Motor neuron (in vitro differentiated cells): ENCODE measurements at regions of chr6 and their contacts with region 1.

Region 1: DNA sequence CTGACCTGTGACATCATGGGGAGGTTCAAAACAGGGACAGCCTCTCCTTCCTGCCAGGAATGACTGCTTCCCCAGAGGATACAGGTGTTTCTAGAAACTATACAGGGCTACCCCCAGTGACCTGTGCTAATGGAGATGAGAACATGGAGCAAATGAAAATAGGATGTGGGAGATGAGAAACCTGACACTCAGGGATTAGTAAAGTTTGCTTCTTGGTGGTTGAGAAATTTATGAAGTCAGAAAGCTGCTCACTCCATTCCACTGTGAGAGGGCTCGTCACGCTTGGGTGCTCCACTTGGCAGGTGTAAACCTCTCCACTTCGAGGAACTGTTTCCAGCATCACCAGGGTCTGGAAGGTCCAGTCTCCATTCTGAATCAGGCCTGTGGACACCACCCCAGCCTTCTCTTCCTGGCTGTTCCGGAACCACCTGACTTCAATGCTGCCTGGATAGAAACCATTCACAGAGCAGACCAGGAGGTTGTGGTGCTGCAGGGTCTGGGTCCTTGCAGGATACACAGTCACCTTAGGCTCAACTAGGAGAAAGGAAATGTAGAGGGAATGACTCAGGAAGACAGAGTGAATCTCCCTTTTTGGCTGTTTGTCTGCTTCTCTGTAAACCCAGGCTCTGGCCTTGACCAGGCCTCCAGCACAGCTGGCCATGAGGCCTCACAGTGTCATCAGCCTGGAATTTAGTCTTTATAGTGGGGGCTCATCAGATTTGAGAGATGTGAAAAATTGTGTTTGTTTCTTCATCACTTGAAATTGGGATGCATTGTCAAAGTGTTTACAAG is 10.8 kb downstream of the HLA-DRB5 start:
- ATAC-seq: no peak
- H3K4me3 ChIP-seq: no peak overlapping the region
- H3K27ac ChIP-seq: no peak overlapping the region
- H3K4me1 ChIP-seq: no peaks in the 10 kb centered on the region

Region 2: DNA sequence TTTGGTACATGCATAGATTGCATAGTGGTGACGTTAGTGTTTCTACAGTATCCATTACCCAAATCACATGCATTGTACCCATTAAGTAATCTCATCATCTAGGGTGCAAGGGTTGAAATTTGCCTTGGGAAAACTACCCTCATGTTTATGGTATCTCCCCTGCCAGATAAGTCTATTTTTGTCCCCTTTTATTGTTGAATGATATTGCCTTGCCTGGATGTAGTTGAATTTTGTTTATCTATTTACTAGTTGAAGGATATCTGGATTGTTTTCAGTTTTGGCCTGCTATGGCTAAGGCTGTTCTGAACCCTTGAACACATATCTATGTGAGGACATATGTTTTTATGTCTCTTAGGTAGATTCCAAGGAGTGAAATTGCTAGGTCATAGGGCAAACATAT is 56.9 kb after region 1 on chr6:
- in situ Hi-C with region 1: loop called in 4 of 9 experiments (anchors 10 kb)
- ATAC-seq: no peak
- H3K4me3 ChIP-seq: no peak overlapping the region
- H3K27ac ChIP-seq: no peak overlapping the region
- H3K4me1 ChIP-seq: no peaks in the 10 kb centered on the region

Region 3: DNA sequence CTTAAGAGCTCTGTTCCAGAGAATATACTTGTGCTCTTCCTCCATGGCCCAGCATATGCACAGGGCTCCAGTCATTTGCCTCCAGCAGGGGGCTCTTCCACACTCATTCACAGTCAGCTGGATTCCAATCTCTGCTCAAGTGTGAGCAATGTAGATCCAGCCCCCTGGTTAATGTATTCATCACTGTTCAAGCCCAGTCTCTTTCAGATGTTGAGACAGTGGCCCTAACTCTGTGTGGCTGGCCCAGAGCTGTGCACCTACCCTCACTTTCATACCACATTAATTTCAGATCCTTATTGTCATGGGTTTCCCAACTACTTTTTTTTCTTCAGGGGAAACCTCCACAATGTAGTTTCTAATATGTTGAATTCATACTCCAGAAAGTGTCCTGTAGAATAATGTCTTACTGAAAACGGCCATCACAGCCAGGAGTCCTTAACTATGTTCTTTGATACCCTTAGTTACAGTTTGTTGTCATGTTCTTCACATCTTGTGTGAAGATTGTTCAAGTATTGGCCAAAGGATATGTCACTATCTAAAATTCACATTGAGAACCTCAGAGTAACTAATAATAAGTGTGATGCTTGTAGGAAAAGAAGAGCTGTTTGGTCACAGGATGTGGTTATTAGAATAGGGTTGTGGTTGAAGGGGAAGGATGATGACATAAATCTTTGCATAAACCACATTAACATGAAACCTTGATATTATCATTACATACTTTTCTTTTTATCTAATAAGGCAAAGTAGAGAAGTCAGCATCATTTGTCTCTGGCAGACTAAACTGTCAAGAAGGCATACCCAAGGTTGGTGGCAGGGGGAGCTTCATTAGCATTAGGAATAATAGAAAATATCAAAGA is 103.5 kb after region 1 on chr6:
- in situ Hi-C with region 1: no loop called
- ATAC-seq: peak in 6 of 8 experiments; percentile 31 to 94 (median 62)
- H3K4me3 ChIP-seq: no peak overlapping the region
- H3K27ac ChIP-seq: no peak overlapping the region
- H3K4me1 ChIP-seq: no peaks in the 10 kb centered on the region